HEK293 (cell line): ENCODE measurements at regions of chrX and their contacts with region 1.

Region 1: GRCh38 chrX:23317799-23318724 is 16.6 kb upstream of the PTCHD1 start:
- H3K4me3 ChIP-seq: no peak overlapping the region
- H3K27ac ChIP-seq: no peak overlapping the region
- H3K4me1 ChIP-seq: no peaks in the 10 kb centered on the region
- CTCF ChIP-seq: no peak

Region 2: GRCh38 chrX:23304881-23305280 is 13.2 kb before region 1 on chrX:
- CTCF ChIA-PET with region 1: interaction called, 11 read pairs
- POLR2A ChIA-PET with region 1: no interaction called
- H3K4me3 ChIP-seq: no peak overlapping the region
- H3K27ac ChIP-seq: no peak overlapping the region
- H3K4me1 ChIP-seq: no peaks in the 10 kb centered on the region
- CTCF ChIP-seq: no peak

Region 3: GRCh38 chrX:23332101-23332887 is 14.2 kb after region 1 on chrX:
- CTCF ChIA-PET with region 1: interaction called, 10 read pairs
- POLR2A ChIA-PET with region 1: no interaction called
- H3K4me3 ChIP-seq: no peak overlapping the region
- H3K27ac ChIP-seq: no peak overlapping the region; the same call in 1 of the 2 replicates
- H3K4me1 ChIP-seq: no peaks in the 10 kb centered on the region
- CTCF ChIP-seq: no peak

Region 4: DNA sequence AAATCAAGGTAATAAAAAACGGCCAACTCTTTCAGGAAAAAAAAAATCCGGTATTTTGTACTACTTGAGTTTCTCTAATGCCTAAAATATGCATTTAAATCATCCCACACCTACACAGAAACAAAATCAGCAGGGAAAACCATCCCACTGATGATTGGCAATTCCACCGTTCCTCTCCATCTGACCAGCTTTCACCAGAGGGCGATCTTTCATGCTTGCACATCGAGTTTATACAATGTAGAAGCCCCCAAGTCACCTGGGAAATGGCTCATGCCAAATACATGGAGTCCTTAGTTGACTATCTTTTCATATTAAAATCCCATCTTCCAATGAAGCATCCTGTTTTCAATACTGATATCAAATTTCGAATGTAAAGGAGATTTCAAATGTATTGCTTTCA is 85.8 kb after region 1 on chrX:
- CTCF ChIA-PET with region 1: no interaction called
- POLR2A ChIA-PET with region 1: no interaction called
- H3K4me3 ChIP-seq: no peak overlapping the region
- H3K27ac ChIP-seq: no peak overlapping the region
- H3K4me1 ChIP-seq: 0 out of 2 replicates have a peak, but pooled peaks cover 2% of the 10 kb centered on the region
- CTCF ChIP-seq: no peak

Region 5: GRCh38 chrX:23548164-23548563 is 230.1 kb after region 1 on chrX:
- CTCF ChIA-PET with region 1: no interaction called
- POLR2A ChIA-PET with region 1: no interaction called
- H3K4me3 ChIP-seq: no peak overlapping the region
- H3K27ac ChIP-seq: 0 out of 2 replicates have a peak overlapping the region, but pooled peaks have one; percentile 27
- H3K4me1 ChIP-seq: peaks cover 15% of the 10 kb centered on the region
- CTCF ChIP-seq: no peak